Activated CD4-positive, alpha-beta memory T cell treated with anti-CD3 and anti-CD28 coated beads for 36 hours (primary cell): ENCODE measurements at regions of chr10 and their contacts with region 1.

Region 1: GRCh38 chr10:63268798-63269503 is 135.8 kb downstream of the NRBF2 start:
- DNase-seq: peak; percentile 89
- H3K4me3 Mint-ChIP-seq: peak overlapping the region; percentile 97
- H3K27ac Mint-ChIP-seq: peak overlapping the region; percentile 97
- H3K4me1 Mint-ChIP-seq: peaks cover 24% of the 10 kb centered on the region
- H3K27me3 Mint-ChIP-seq: no peaks in the 10 kb centered on the region

Region 2: GRCh38 chr10:61903221-61903927 is 1365.6 kb before region 1 on chr10:
- CTCF ChIA-PET with region 1: no interaction called
- POLR2A ChIA-PET with region 1: no interaction called
- intact Hi-C with region 1: loop called (anchors 5 kb)
- DNase-seq: peak; percentile 84
- H3K4me3 Mint-ChIP-seq: peak overlapping the region; percentile 90
- H3K27ac Mint-ChIP-seq: peak overlapping the region; percentile 95
- H3K4me1 Mint-ChIP-seq: peaks cover 45% of the 10 kb centered on the region
- H3K27me3 Mint-ChIP-seq: no peaks in the 10 kb centered on the region

Region 3: GRCh38 chr10:62992145-62992721 is 276.7 kb before region 1 on chr10:
- CTCF ChIA-PET with region 1: no interaction called
- POLR2A ChIA-PET with region 1: no interaction called
- intact Hi-C with region 1: loop called (anchors 5 kb)
- DNase-seq: peak; percentile 20
- H3K4me3 Mint-ChIP-seq: peak overlapping the region; percentile 24
- H3K27ac Mint-ChIP-seq: peak overlapping the region; percentile 84
- H3K4me1 Mint-ChIP-seq: peaks cover 54% of the 10 kb centered on the region
- H3K27me3 Mint-ChIP-seq: peaks cover 7% of the 10 kb centered on the region

Region 4: GRCh38 chr10:63217120-63217605 is 51.8 kb before region 1 on chr10:
- CTCF ChIA-PET with region 1: interaction called, 14 read pairs
- POLR2A ChIA-PET with region 1: no interaction called
- intact Hi-C with region 1: loop called (anchors 2 kb)
- DNase-seq: no peak
- H3K4me3 Mint-ChIP-seq: no peak overlapping the region
- H3K27ac Mint-ChIP-seq: peak overlapping the region; percentile 42
- H3K4me1 Mint-ChIP-seq: peaks cover 55% of the 10 kb centered on the region
- H3K27me3 Mint-ChIP-seq: no peaks in the 10 kb centered on the region

Region 5: GRCh38 chr10:63355682-63356081 is 86.7 kb after region 1 on chr10:
- CTCF ChIA-PET with region 1: interaction called, 5 read pairs
- POLR2A ChIA-PET with region 1: interaction called, 8 read pairs
- intact Hi-C with region 1: loop called (anchors 1 kb)
- DNase-seq: no peak
- H3K4me3 Mint-ChIP-seq: no peak overlapping the region
- H3K27ac Mint-ChIP-seq: no peak overlapping the region
- H3K4me1 Mint-ChIP-seq: peaks cover 25% of the 10 kb centered on the region
- H3K27me3 Mint-ChIP-seq: no peaks in the 10 kb centered on the region

Region 6: DNA sequence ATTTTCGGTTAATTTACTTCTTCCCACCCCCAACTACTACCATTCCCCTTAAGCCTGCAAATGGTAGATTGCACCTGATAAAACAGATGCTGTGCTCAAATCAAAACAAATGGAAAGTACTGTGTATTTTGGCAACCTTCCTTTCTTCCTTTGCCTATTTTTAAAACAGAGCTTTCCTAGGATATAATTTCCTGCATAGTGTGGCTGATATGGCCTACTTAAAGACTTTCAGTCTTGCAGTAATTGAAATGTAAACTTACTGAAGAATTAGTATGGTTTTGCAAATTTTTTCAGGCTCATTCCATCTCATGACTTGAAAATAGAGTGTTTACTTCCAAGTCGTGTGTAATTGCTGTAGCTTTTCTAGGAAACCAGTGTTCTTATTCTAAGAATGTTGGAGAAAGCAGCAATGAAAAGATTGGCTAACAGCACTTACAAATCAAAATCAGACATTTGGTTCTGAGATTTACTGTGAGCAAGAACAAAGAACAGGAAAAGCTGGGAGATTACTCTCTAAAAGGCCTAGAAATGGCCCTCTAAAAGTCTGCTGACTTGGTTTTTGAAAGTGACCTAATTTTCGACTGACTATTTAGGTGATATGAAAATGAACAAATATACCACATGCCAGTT is 304.2 kb after region 1 on chr10:
- CTCF ChIA-PET with region 1: no interaction called
- POLR2A ChIA-PET with region 1: no interaction called
- intact Hi-C with region 1: loop called (anchors 1 kb)
- DNase-seq: no peak
- H3K4me3 Mint-ChIP-seq: no peak overlapping the region
- H3K27ac Mint-ChIP-seq: peak overlapping the region; percentile 40
- H3K4me1 Mint-ChIP-seq: peaks cover 28% of the 10 kb centered on the region
- H3K27me3 Mint-ChIP-seq: no peaks in the 10 kb centered on the region